Activated CD8-positive, alpha-beta T cell treated with anti-CD3 and anti-CD28 coated beads for 36 hours (primary cell): ENCODE measurements at regions of chr16 and their contacts with region 1.

Region 1: DNA sequence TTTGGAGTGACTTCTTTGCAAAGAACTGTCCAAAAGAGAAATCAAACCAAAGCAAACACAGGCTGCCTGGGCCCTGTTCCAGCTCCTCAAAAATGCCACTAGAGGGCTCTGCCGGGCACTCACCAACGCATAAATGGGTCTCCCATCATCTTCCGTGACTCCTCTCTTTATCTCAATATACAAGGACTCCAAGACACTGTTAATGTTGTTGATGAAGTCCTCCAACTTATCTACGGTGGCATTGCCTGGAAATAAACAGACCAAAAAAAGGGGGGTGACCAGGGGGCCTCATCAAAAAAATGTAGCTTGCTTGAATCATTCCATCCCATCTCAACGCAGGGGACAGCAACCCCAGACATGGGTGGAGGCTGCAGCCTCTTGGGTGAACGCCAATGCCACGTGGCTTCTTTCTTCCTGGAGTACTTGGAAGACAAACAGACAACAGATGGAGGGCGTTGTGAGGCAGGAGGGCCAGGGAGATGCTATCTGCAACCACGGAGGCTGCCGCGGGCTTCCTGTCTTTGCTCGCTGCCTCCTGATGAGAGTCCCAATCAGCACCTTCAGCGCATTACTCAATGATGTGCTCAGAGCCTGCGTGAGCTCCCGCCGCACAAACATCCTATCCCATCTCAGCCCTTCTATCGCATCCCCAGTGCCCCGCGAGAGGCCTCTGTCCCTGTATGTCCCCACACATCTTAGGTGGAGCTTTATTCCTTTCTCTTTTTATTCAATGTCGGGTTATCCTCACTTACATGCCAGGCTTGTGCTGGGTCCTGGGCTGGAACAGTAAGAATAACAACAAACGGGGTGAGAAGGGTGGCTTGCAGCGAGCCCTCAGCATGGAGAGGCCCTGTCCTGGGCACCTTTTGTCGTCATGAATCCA is 32.0 kb downstream of the KDM8 start:
- DNase-seq: peak; percentile 94
- ATAC-seq: peak; percentile 31
- H3K4me3 Mint-ChIP-seq: peak overlapping the region; percentile 73
- H3K27ac Mint-ChIP-seq: peak overlapping the region; percentile 98
- H3K4me1 Mint-ChIP-seq: peaks cover 94% of the 10 kb centered on the region
- H3K27me3 Mint-ChIP-seq: no peaks in the 10 kb centered on the region
- CTCF ChIP-seq: peak; percentile 91

Region 2: DNA sequence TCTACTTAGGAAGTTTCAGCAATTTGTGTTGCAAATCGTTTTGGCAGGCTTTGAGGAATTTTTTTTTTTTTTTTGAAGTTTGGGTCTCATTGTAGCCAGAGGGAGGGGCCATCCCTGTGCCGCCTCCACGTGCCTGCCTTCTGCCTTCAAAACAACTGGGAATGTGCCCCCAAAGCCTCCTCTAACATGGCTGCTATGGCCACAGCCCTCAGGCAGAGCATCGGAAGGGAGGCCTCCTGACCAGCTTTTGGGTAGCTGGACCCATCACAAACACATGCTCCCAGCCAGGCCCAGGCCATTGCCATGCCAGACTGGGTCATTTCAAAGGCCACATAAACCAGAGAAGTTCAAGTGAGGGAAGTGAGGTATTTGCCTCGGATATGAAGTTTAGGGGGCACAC is 147.1 kb before region 1 on chr16:
- CTCF ChIA-PET with region 1: no interaction called
- POLR2A ChIA-PET with region 1: no interaction called
- intact Hi-C with region 1: no loop called
- DNase-seq: no peak
- ATAC-seq: no peak
- H3K4me3 Mint-ChIP-seq: no peak overlapping the region
- H3K27ac Mint-ChIP-seq: no peak overlapping the region
- H3K4me1 Mint-ChIP-seq: no peaks in the 10 kb centered on the region
- H3K27me3 Mint-ChIP-seq: peaks cover 27% of the 10 kb centered on the region
- CTCF ChIP-seq: no peak

Region 3: GRCh38 chr16:27179500-27180072 is 55.7 kb before region 1 on chr16:
- CTCF ChIA-PET with region 1: interaction called, 26 read pairs
- POLR2A ChIA-PET with region 1: interaction called, 3 read pairs
- intact Hi-C with region 1: loop called (anchors 5 kb)
- DNase-seq: peak; percentile 97
- ATAC-seq: peak; percentile 98
- H3K4me3 Mint-ChIP-seq: no peak overlapping the region
- H3K27ac Mint-ChIP-seq: peak overlapping the region; percentile 43
- H3K4me1 Mint-ChIP-seq: peaks cover 44% of the 10 kb centered on the region
- H3K27me3 Mint-ChIP-seq: no peaks in the 10 kb centered on the region
- CTCF ChIP-seq: peak; percentile 98

Region 4: DNA sequence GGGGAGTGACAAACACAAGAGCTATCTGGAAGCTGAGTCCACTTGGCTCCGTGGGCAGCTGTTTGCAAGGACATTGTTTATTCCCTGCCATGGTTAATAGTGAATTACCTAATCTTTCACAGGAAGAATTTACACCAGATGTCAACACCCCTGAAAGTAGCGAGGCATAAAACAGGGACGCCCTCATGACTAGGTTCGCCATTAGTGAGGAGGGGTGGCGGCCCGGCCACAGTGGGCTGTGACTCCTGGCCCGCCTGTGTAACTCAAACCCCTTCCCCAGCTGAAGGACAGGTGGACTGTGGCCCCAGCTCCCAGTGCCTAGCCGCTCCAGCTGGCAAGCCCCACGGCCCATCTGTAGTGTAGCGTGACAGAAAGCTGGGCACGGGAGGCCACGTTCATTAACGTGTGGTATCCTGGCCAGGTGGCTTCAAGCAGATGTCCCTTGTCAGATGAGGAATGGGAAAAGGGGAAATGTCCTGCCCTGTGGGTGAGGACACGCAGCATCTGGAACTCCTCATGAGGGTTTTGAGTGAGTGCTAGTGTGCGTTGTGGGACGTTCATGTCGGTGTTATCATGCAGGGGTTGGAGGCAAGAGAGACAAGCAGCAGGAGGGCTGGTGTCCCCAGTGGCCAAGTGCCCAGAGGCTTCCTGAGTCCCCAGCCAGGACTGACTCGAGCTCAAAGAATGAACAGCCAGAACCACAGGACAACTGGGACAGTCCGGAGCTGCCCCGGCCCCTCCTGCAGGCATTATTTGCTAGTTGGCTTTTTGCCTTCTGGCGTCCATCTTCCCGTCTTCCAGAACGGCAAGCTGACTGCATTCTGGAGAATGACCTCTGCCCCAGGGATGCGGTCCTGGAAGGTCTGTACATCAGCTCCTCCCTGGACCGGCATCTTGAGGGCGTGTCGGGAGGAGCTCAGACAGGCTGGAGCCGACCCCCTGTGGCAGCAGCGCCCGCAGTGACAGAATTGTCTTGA is 12.8 kb before region 1 on chr16:
- CTCF ChIA-PET with region 1: interaction called, 14 read pairs
- POLR2A ChIA-PET with region 1: interaction called, 13 read pairs
- intact Hi-C with region 1: no loop called
- DNase-seq: no peak
- ATAC-seq: no peak
- H3K4me3 Mint-ChIP-seq: no peak overlapping the region
- H3K27ac Mint-ChIP-seq: peak overlapping the region; percentile 42
- H3K4me1 Mint-ChIP-seq: peaks cover 20% of the 10 kb centered on the region
- H3K27me3 Mint-ChIP-seq: no peaks in the 10 kb centered on the region
- CTCF ChIP-seq: no peak

Region 5: DNA sequence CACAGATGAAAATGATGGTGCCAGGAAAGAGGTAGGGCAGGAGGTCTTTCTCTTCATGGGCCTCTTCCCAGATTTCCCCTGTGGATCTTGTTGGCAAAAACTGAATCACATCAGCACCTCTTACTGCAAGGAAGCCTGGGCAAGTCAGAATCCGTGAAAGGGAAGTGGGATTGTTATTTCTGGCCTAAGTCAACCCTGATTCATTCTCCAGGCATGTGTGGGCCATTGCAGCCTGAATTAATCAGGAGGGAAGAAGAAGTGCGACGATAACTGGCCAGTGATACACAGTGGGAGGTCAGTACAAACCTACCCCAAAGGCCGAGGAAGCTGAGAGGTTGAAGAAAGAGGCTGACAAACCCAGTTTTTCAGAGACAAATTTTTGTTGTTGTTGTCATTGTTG is 51.2 kb after region 1 on chr16:
- CTCF ChIA-PET with region 1: interaction called, 11 read pairs
- POLR2A ChIA-PET with region 1: interaction called, 27 read pairs
- intact Hi-C with region 1: no loop called
- DNase-seq: no peak
- ATAC-seq: no peak
- H3K4me3 Mint-ChIP-seq: no peak overlapping the region
- H3K27ac Mint-ChIP-seq: no peak overlapping the region
- H3K4me1 Mint-ChIP-seq: peaks cover 64% of the 10 kb centered on the region
- H3K27me3 Mint-ChIP-seq: peaks cover 2% of the 10 kb centered on the region
- CTCF ChIP-seq: no peak

Region 6: DNA sequence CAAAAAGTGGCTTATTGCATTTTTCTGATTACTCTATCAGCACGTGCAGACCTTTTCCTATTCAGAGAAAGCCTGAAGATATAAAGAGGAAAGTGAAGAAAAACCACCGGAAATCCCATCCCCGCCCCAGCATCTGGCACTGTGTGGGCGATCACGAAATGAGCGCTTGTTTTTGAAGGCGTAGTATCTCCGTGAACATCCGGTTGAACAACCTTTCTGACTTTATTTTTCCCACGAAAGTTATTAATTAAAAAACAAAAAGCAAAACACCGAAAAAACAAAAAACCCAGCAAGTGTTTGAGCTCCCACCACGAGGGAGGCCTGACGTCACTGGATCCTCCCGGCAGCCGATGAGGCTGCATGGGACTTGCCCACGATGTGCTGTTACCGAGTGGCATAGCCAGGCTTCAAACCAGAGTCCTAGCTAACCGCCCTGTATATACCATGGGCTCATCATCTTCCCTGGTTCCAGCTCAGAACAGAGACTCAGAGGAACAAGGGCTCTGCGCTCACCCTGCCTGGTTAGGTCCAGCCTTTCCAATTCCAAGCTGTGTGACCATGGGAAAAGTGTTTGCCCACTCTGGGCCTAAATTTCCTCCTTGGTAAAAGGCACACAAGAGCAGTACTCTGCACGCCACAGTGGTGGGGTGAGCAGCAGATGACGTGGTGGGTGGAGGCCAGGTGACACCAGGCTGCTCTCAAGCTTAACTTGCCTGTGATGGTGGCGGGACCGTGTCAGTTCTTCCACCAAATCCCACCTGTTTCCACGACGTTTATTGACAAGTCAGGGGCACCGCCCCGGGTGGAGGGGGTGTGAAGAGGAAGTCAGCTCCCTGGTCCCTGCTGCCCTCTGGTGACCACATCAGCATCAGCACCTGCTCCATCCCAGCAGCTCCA is 132.4 kb after region 1 on chr16:
- CTCF ChIA-PET with region 1: interaction called, 70 read pairs
- POLR2A ChIA-PET with region 1: interaction called, 33 read pairs
- intact Hi-C with region 1: loop called (anchors 1 kb)
- DNase-seq: peak; percentile 99
- ATAC-seq: peak; percentile 71
- H3K4me3 Mint-ChIP-seq: peak overlapping the region; percentile 50
- H3K27ac Mint-ChIP-seq: peak overlapping the region; percentile 100
- H3K4me1 Mint-ChIP-seq: peaks cover 84% of the 10 kb centered on the region
- H3K27me3 Mint-ChIP-seq: no peaks in the 10 kb centered on the region
- CTCF ChIP-seq: peak; percentile 86

Region 7: DNA sequence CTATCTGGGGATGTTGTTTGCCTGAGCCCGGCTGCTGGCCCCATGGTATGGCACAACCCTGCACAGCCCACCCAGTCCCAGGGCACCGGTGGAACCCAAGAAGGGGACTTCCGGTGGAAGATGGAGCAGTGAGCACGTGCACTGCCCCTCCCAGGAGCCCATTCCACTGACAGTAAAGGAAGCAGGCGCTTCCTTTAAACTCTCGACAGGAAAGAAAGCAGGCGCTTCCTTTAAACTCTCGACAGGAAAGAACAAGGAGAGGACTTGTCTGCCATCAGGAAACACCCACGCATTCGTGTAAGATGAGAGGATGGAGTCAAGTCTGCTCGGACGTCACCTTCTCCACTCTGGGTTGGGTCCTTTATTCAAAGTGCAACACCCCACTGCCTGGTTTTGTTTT is 220.4 kb after region 1 on chr16:
- CTCF ChIA-PET with region 1: interaction called, 7 read pairs
- POLR2A ChIA-PET with region 1: interaction called, 8 read pairs
- intact Hi-C with region 1: loop called (anchors 2 kb)
- DNase-seq: peak; percentile 60
- ATAC-seq: peak; percentile 14
- H3K4me3 Mint-ChIP-seq: no peak overlapping the region
- H3K27ac Mint-ChIP-seq: peak overlapping the region; percentile 73
- H3K4me1 Mint-ChIP-seq: peaks cover 71% of the 10 kb centered on the region
- H3K27me3 Mint-ChIP-seq: no peaks in the 10 kb centered on the region
- CTCF ChIP-seq: no peak